ENCODE measurements at regions of chr7 and their contacts with region 1.

Region 1: DNA sequence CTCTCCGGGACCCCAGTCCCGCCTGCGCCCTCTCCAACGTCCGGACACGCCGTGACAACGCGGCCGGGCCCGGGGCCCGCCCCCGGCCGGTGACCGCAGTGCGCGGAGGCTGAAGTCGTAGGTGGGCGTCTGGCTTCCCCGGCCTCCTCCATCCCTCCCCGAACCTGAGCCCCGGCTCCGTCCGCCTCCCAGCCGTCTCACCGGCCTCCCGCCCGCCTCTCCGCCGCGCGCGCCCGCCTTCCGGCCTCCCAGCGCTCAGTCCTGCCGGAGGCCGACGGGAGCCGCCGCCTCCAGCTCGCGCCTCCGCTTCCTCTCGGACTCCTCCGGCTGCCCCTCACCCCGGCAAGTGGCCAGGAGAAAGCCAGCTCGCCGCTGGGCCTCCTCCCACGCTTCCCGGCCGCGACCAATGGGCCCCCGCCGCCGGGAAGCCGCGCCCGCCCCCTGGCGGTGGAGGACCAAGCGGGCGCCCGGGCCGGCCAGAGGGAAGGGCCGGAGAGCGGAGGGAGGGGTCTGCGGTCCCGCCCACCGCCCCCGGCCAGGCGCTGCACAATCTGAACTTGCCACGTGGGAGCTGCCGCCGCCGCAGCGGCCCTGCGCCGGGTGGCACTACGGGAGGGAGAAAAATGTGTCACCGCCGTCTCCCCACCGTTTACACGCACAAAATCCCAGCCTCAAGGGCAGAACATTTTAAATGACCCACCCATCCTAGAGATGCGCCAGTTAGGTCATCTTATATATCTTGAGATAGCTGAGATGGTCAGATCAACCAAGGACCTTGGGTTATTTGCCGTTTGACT is at the start of gene FAM3C:
- DNase-seq: peak; percentile 96
- H3K4me3 ChIP-seq: peak within 1 kb of the TSS; percentile 73 to 100 (median 99)
- H3K27ac ChIP-seq: peak within 1 kb of the TSS; percentile 87
- H3K4me1 ChIP-seq: peaks cover 16% of the 10 kb centered on the region
- H3K27me3 ChIP-seq: no peaks in the 10 kb centered on the region
- CTCF ChIP-seq: peak; percentile 75 to 96
- POLR2A ChIP-seq: peak; percentile 51
- total RNA-seq, gene FAM3C: 50.0 and 54.5 TPM in 2 replicates

Region 2: DNA sequence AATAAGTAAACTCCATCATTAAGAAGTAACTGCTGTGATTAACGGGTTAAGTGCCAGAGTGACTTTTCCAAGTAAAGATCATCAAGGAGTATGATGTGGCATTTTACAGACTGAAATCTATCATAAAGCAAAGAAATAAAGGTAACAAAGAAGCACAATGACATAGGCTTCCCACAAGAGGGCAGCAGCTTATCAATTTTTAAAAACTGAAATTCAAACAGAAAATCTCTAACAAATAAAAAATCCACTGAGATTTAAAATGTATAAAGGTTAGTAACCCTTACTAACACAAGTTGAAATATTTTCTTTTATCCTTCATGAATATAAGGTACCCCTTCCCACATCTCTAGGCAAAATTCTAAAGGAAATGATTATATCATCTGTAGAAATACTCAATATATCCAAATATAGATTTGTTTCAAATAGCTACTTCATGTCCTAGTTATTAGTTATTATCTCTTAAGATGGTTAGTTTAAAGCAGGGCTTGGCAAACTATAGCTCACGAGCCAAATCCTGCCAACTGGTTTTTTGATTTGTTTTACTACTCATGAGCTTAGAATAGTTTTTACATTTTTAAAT is 29.2 kb before region 1 on chr7:
- CTCF ChIA-PET with region 1: interaction called, 104 read pairs
- POLR2A ChIA-PET with region 1: interaction called, 19 read pairs
- dilution Hi-C with region 1: no loop called
- intact Hi-C with region 1: loop called (anchors 1 kb)
- DNase-seq: peak; percentile 58
- H3K4me3 ChIP-seq: no peak overlapping the region
- H3K27ac ChIP-seq: no peak overlapping the region
- H3K4me1 ChIP-seq: peaks cover under 1% of the 10 kb centered on the region
- H3K27me3 ChIP-seq: no peaks in the 10 kb centered on the region
- CTCF ChIP-seq: peak; percentile 35 to 40
- POLR2A ChIP-seq: no peak

Region 3: DNA sequence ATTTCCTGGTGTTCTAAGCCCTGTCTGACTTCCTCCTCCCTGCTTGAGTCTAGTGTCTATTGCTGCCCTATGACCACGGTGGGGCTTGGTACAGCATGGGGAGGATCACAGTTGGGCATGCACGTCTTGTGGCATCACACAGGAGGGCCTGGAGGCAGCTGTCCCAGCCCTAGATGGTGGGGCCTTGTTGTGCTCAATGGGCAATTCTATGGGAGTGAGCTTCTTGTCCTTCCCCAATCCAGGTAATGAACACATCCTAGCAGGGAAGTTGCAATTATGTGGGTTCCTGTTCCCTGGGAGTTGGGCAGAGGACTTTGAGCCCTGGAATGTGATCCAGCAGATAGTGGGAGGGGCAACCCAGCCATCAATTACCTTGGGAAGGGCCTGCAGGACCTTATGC is 10.8 kb after region 1 on chr7:
- CTCF ChIA-PET with region 1: interaction called, 18 read pairs
- POLR2A ChIA-PET with region 1: no interaction called
- dilution Hi-C with region 1: no loop called
- intact Hi-C with region 1: no loop called
- DNase-seq: no peak
- H3K4me3 ChIP-seq: no peak overlapping the region
- H3K27ac ChIP-seq: no peak overlapping the region
- H3K4me1 ChIP-seq: no peaks in the 10 kb centered on the region
- H3K27me3 ChIP-seq: peaks cover 0 to 6% of the 10 kb centered on the region in 2 experiments
- CTCF ChIP-seq: no peak
- POLR2A ChIP-seq: no peak

Region 4: GRCh38 chr7:121437456-121438127 is 41.4 kb after region 1 on chr7:
- CTCF ChIA-PET with region 1: interaction called, 9 read pairs
- POLR2A ChIA-PET with region 1: interaction called, 3 read pairs
- dilution Hi-C with region 1: no loop called
- intact Hi-C with region 1: loop called (anchors 1 kb)
- DNase-seq: peak; percentile 11
- H3K4me3 ChIP-seq: no peak overlapping the region
- H3K27ac ChIP-seq: no peak overlapping the region
- H3K4me1 ChIP-seq: peaks cover 10% of the 10 kb centered on the region
- H3K27me3 ChIP-seq: no peaks in the 10 kb centered on the region
- CTCF ChIP-seq: no peak
- POLR2A ChIP-seq: no peak

Region 5: GRCh38 chr7:121530227-121531174 is 134.3 kb after region 1 on chr7:
- CTCF ChIA-PET with region 1: interaction called, 7 read pairs
- POLR2A ChIA-PET with region 1: no interaction called
- dilution Hi-C with region 1: no loop called
- intact Hi-C with region 1: loop called (anchors 5 kb)
- DNase-seq: peak; percentile 84
- H3K4me3 ChIP-seq: no peak overlapping the region
- H3K27ac ChIP-seq: peak overlapping the region; percentile 85
- H3K4me1 ChIP-seq: peaks cover 20% of the 10 kb centered on the region
- H3K27me3 ChIP-seq: no peaks in the 10 kb centered on the region
- CTCF ChIP-seq: no peak
- POLR2A ChIP-seq: no peak

Region 6: GRCh38 chr7:121774563-121774962 is 378.4 kb after region 1 on chr7:
- CTCF ChIA-PET with region 1: no interaction called
- POLR2A ChIA-PET with region 1: no interaction called
- dilution Hi-C with region 1: no loop called
- intact Hi-C with region 1: no loop called
- DNase-seq: no peak
- H3K4me3 ChIP-seq: no peak overlapping the region
- H3K27ac ChIP-seq: no peak overlapping the region
- H3K4me1 ChIP-seq: no peaks in the 10 kb centered on the region
- H3K27me3 ChIP-seq: no peaks in the 10 kb centered on the region
- CTCF ChIP-seq: no peak
- POLR2A ChIP-seq: no peak